ENCODE measurements at regions of chrX and their contacts with region 1.

Region 1: DNA sequence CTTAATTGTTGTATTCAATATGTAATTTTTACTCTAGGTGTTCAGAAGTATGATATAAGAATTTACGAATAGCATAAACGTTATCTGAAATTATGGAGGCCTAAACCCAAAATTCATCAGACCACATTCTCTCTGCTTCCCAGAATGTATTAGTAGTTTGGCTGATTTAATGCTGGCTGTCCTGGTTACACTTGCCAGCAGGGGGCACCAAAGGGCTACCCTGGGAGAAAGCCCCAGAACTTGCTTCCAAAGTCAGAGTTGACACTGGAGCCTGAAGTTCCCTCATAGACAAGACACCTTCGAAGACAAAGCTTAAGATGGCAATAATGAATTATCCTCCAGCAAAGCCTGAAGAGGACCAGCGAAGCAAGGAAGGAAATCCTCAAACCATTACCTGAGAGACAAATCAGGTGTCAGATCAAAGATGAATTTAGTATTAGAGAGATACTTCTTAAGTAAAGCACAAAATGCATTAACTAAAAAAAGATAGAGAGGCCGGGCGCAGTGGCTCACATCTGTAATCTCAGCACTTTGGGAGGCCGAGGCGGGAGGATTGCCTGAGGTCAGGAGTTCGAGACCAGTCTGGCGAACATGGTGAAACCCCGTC is 11.3 kb upstream of the ANOS1 start:
- DNase-seq: no peak
- H3K4me3 ChIP-seq: no peak overlapping the region
- CTCF ChIP-seq: peak; percentile 55

Region 2: DNA sequence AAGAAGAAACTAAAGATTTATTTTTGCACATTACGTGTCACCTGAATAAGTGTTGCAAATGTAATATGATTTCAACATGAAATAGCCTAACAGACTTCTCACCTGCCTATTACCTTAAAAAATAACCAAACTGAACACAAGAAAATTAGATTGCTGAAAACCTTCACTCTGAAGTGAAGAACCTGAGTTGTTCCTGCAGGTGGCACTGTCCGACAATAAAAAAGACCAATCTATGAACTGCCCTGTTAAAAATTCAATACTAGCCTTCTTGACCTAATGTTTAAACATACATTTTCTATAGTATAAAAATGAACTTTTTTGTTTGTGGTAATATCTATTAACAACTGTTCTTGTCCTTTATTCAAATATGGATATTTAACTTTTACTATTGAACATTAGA is 746.8 kb before region 1 on chrX:
- CTCF ChIA-PET with region 1: interaction called, 28 read pairs
- POLR2A ChIA-PET with region 1: no interaction called
- DNase-seq: no peak
- H3K4me3 ChIP-seq: no peak overlapping the region
- CTCF ChIP-seq: no peak

Region 3: GRCh38 chrX:8673201-8673600 is 70.0 kb before region 1 on chrX:
- CTCF ChIA-PET with region 1: no interaction called
- POLR2A ChIA-PET with region 1: no interaction called
- DNase-seq: no peak
- H3K4me3 ChIP-seq: no peak overlapping the region
- CTCF ChIP-seq: no peak

Region 4: DNA sequence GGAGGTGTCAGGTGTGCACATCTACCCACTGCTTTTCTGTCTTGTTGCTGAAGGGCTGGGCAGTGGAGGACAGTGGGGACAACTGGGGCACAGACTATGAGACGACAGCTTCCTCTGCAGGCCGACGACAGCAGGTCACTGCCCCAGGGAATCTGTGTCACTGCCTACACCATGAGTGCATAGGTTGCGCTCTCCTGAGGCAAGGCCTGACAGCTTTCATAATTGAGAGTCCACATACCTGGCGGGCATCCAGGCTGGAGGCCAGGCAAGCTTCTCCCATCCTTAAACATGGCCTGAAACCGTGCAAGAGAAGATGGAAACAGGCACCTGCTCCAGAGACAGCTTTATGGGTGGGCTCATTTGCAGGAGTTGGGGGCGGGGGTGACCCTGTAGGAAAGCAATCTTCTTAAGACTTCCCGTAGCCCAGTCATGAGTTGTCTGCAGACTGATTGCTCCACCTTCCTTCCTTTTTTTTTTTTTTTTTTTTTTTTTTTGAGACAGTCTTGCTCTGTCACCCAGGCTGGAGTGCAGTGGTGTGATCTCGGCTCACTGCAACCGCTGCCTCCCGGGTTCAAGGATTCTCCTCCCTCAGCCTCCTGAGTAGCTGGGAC is 14.2 kb before region 1 on chrX:
- CTCF ChIA-PET with region 1: interaction called, 13 read pairs
- POLR2A ChIA-PET with region 1: no interaction called
- DNase-seq: no peak
- H3K4me3 ChIP-seq: no peak overlapping the region
- CTCF ChIP-seq: no peak

Region 5: GRCh38 chrX:8815464-8816065 is 72.3 kb after region 1 on chrX:
- CTCF ChIA-PET with region 1: interaction called, 57 read pairs
- POLR2A ChIA-PET with region 1: no interaction called
- DNase-seq: no peak
- H3K4me3 ChIP-seq: no peak overlapping the region
- CTCF ChIP-seq: peak; percentile 58

Measured in AG04449 (cell line).